ENCODE measurements at regions of chr7 and their contacts with region 1.

Region 1: GRCh38 chr7:17512181-17512675 is 213.8 kb downstream of the AHR start:
- DNase-seq: no peak
- ATAC-seq: peak; percentile 27; the same call in 1 of the 2 replicates
- H3K4me3 ChIP-seq: no peak overlapping the region
- H3K27ac ChIP-seq: no peak overlapping the region
- H3K4me1 ChIP-seq: 0 out of 2 replicates have a peak, but pooled peaks cover 2% of the 10 kb centered on the region
- H3K27me3 ChIP-seq: no peaks in the 10 kb centered on the region
- CTCF ChIP-seq: no peak
- POLR2A ChIP-seq: no peak
- RAD21 ChIP-seq: no peak

Region 2: GRCh38 chr7:17466216-17466615 is 46.0 kb before region 1 on chr7:
- CTCF ChIA-PET with region 1: no interaction called
- POLR2A ChIA-PET with region 1: no interaction called
- dilution Hi-C with region 1: no loop called
- in situ Hi-C with region 1: no loop called
- intact Hi-C with region 1: loop called (anchors 5 kb)
- DNase-seq: no peak
- ATAC-seq: no peak
- H3K4me3 ChIP-seq: no peak overlapping the region
- H3K27ac ChIP-seq: no peak overlapping the region
- H3K4me1 ChIP-seq: no peaks in the 10 kb centered on the region
- H3K27me3 ChIP-seq: no peaks in the 10 kb centered on the region
- CTCF ChIP-seq: no peak
- POLR2A ChIP-seq: no peak
- RAD21 ChIP-seq: no peak

Measured in IMR-90 (cell line).